Prostate gland (tissue), 2 donors: ENCODE measurements at regions of chr18 and their contacts with region 1.

Region 1: DNA sequence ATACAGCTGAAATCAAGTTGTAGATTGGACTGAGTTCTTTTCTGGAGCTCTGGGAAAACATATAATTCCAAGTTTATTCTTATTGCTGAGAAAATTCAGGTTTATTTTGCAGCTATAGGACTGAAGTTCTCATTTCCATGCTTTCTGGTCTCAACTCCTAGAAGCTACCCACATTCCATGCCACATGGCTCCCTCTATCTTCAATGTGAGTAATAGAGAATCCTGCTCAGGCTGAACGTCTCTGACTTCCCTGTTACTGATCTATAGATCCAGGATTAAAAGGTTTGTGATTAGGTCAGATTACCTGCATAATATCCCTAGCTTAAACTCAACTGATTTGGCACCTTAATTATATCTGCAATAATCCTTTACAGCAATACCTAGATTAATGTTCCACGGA is 453.8 kb upstream of the MC4R start:
- DNase-seq: no peak
- H3K4me3 ChIP-seq: no peak overlapping the region
- H3K27ac ChIP-seq: no peak overlapping the region
- H3K4me1 ChIP-seq: no peaks in the 10 kb centered on the region
- H3K27me3 ChIP-seq: no peaks in the 10 kb centered on the region
- CTCF ChIP-seq: no peak
- POLR2A ChIP-seq: no peak

Region 2: DNA sequence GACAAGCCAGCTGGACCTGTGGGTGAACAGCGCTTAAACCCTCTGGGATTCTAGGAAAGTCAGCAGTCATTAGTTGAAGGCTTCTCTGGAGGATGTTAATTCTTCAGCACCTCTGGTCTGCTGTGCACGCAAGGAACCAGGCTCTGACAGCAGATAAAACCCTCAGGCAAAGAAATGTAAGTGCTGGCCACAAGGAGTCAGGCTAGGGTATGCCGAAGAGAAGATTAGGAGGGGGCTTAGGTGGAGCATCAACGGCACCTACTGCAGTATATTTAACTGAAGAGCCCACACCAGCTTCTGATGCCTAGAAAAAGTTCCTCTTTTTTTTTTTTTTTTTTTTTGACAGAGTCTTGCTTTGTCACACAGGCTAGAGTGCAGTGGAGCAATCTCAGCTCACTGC is 149.5 kb before region 1 on chr18:
- intact Hi-C with region 1: no loop called
- DNase-seq: no peak
- H3K4me3 ChIP-seq: no peak overlapping the region
- H3K27ac ChIP-seq: no peak overlapping the region
- H3K4me1 ChIP-seq: no peaks in the 10 kb centered on the region
- H3K27me3 ChIP-seq: no peaks in the 10 kb centered on the region
- CTCF ChIP-seq: no peak
- POLR2A ChIP-seq: no peak

Region 3: GRCh38 chr18:60873708-60874107 is 47.4 kb after region 1 on chr18:
- intact Hi-C with region 1: no loop called
- DNase-seq: no peak
- H3K4me3 ChIP-seq: no peak overlapping the region
- H3K27ac ChIP-seq: no peak overlapping the region
- H3K4me1 ChIP-seq: no peaks in the 10 kb centered on the region
- H3K27me3 ChIP-seq: no peaks in the 10 kb centered on the region
- CTCF ChIP-seq: no peak
- POLR2A ChIP-seq: no peak

Region 4: GRCh38 chr18:61496374-61496773 is 670.0 kb after region 1 on chr18:
- intact Hi-C with region 1: loop called (anchors 10 kb)
- DNase-seq: no peak
- H3K4me3 ChIP-seq: no peak overlapping the region
- H3K27ac ChIP-seq: no peak overlapping the region
- H3K4me1 ChIP-seq: no peaks in the 10 kb centered on the region
- H3K27me3 ChIP-seq: no peaks in the 10 kb centered on the region
- CTCF ChIP-seq: no peak
- POLR2A ChIP-seq: no peak

Region 5: DNA sequence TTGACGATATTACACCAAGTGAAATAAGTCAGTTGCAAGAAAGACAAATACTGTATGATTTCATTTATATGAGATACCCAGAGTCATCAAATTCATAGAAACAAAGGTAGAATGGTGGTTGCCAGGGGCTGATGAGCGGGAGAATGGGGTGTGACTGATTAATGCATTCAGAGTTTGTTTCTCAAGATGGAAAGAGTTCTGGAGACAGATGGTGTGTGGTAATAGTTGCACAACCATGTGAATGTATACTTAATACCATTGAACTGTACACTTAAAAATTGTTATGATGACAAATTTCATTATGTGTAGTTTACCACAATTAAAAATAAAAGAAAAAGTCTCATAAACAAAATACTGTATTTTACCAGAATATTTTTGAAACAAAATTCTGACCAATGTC is 1243.2 kb after region 1 on chr18:
- intact Hi-C with region 1: no loop called
- DNase-seq: no peak
- H3K4me3 ChIP-seq: no peak overlapping the region
- H3K27ac ChIP-seq: no peak overlapping the region
- H3K4me1 ChIP-seq: no peaks in the 10 kb centered on the region
- H3K27me3 ChIP-seq: no peaks in the 10 kb centered on the region
- CTCF ChIP-seq: no peak
- POLR2A ChIP-seq: no peak